PC-3 (cell line): ENCODE measurements at regions of chr10 and their contacts with region 1.

Region 1: GRCh38 chr10:50624866-50625692 is 1.3 kb upstream of the SGMS1 start:
- DNase-seq: peak; percentile 93
- ATAC-seq: peak; percentile 52
- H3K4me3 ChIP-seq: peak overlapping the region; percentile 74
- H3K27ac ChIP-seq: peak overlapping the region; percentile 89
- H3K4me1 ChIP-seq: peaks cover 23% of the 10 kb centered on the region
- H3K27me3 ChIP-seq: no peaks in the 10 kb centered on the region
- CTCF ChIP-seq: peak; percentile 80

Region 2: GRCh38 chr10:50310560-50311174 is 314.4 kb before region 1 on chr10:
- CTCF ChIA-PET with region 1: no interaction called
- POLR2A ChIA-PET with region 1: interaction called, 13 read pairs
- intact Hi-C with region 1: no loop called
- DNase-seq: peak; percentile 84
- ATAC-seq: peak; percentile 68
- H3K4me3 ChIP-seq: no peak overlapping the region
- H3K27ac ChIP-seq: no peak overlapping the region
- H3K4me1 ChIP-seq: peaks cover 13% of the 10 kb centered on the region
- H3K27me3 ChIP-seq: no peaks in the 10 kb centered on the region
- CTCF ChIP-seq: peak; percentile 90

Region 3: DNA sequence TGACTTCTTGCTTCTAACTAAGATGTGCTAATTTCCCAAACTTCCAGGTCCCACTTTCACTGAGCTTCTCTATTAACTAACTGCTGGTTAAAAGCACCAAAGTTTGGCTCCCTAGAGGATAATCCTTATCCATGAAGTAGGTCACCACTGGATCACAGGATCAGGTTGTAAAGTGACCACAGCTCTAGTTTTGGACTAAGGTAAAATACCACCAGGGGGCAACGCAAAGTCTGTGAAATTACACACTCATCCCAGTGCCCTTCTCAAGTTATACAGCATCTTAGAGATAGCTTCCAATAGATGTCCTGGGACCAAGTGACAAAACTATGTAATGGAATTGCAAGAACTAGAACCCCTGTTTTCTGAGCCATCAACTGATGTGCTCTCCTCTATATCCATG is 257.3 kb before region 1 on chr10:
- CTCF ChIA-PET with region 1: interaction called, 5 read pairs
- POLR2A ChIA-PET with region 1: interaction called, 6 read pairs
- intact Hi-C with region 1: loop called (anchors 1 kb)
- DNase-seq: peak; percentile 94
- ATAC-seq: peak; percentile 89
- H3K4me3 ChIP-seq: no peak overlapping the region
- H3K27ac ChIP-seq: no peak overlapping the region
- H3K4me1 ChIP-seq: peaks cover 12% of the 10 kb centered on the region
- H3K27me3 ChIP-seq: no peaks in the 10 kb centered on the region
- CTCF ChIP-seq: peak; percentile 98

Region 4: GRCh38 chr10:50421026-50421719 is 203.9 kb before region 1 on chr10:
- CTCF ChIA-PET with region 1: interaction called, 3 read pairs
- POLR2A ChIA-PET with region 1: no interaction called
- intact Hi-C with region 1: loop called (anchors 5 kb)
- DNase-seq: peak; percentile 91
- ATAC-seq: peak; percentile 60
- H3K4me3 ChIP-seq: no peak overlapping the region
- H3K27ac ChIP-seq: no peak overlapping the region
- H3K4me1 ChIP-seq: peaks cover 34% of the 10 kb centered on the region
- H3K27me3 ChIP-seq: no peaks in the 10 kb centered on the region
- CTCF ChIP-seq: peak; percentile 100

Region 5: DNA sequence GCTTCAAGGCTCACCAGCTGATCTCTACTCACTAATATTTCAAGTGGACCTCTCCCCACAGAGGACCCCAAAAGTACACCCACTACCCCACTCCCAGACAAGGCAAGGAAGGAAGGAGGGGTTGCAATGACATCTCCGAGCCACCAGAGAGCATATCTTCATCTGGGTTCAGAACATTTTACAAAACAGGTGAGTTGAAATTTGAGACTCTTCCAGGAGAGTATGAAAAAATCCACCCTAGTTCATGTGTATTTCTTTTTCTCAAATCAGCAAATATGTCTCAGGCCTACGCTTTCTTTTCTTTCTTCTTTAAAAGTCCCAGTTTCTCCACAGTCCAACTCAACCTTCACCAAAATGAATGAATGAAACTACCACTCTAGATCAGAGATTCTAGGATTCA is 63.3 kb before region 1 on chr10:
- CTCF ChIA-PET with region 1: interaction called, 6 read pairs
- POLR2A ChIA-PET with region 1: interaction called, 3 read pairs
- intact Hi-C with region 1: loop called (anchors 1 kb)
- DNase-seq: peak; percentile 87
- ATAC-seq: peak; percentile 81
- H3K4me3 ChIP-seq: no peak overlapping the region
- H3K27ac ChIP-seq: no peak overlapping the region
- H3K4me1 ChIP-seq: peaks cover 13% of the 10 kb centered on the region
- H3K27me3 ChIP-seq: no peaks in the 10 kb centered on the region
- CTCF ChIP-seq: peak; percentile 100

Region 6: DNA sequence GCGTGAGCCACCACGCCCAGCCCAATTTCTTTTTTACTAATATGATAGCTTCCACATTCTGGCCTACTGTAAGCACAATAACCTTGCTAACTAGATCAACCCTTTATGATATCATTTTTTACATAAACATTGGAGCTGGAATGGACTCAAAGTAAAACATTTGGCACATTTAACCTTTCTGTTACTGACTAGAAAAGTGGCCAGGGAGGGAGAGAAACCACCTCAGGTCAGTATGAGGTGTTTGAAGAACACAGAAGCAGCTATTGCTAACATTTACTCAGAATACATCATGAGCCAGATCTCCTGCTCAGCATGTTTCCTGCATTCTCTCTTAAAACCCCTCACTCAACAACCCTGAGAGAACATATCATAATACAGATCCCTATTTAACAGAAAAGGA is 28.6 kb before region 1 on chr10:
- CTCF ChIA-PET with region 1: no interaction called
- POLR2A ChIA-PET with region 1: no interaction called
- intact Hi-C with region 1: no loop called
- DNase-seq: no peak
- ATAC-seq: no peak
- H3K4me3 ChIP-seq: no peak overlapping the region
- H3K27ac ChIP-seq: no peak overlapping the region
- H3K4me1 ChIP-seq: peaks cover 18% of the 10 kb centered on the region
- H3K27me3 ChIP-seq: no peaks in the 10 kb centered on the region
- CTCF ChIP-seq: no peak

Region 7: GRCh38 chr10:50653142-50653541 is 28.1 kb after region 1 on chr10:
- CTCF ChIA-PET with region 1: interaction called, 3 read pairs
- POLR2A ChIA-PET with region 1: interaction called, 4 read pairs
- intact Hi-C with region 1: loop called (anchors 1 kb)
- DNase-seq: peak; percentile 83
- ATAC-seq: peak; percentile 94
- H3K4me3 ChIP-seq: no peak overlapping the region
- H3K27ac ChIP-seq: no peak overlapping the region
- H3K4me1 ChIP-seq: 0 out of 2 replicates have a peak, but pooled peaks cover 3% of the 10 kb centered on the region
- H3K27me3 ChIP-seq: 0 out of 2 replicates have a peak, but pooled peaks cover 3% of the 10 kb centered on the region
- CTCF ChIP-seq: peak; percentile 98